Breast epithelium (tissue), 4 donors: ENCODE measurements at regions of chr12 and their contacts with region 1.

Region 1: GRCh38 chr12:76094754-76095153 is 10.3 kb upstream of the NAP1L1 start:
- DNase-seq: no peak
- H3K4me3 ChIP-seq: no peak overlapping the region
- H3K27ac ChIP-seq: no peak overlapping the region
- H3K4me1 ChIP-seq: no peaks in the 10 kb centered on the region
- H3K27me3 ChIP-seq: no peaks in the 10 kb centered on the region
- CTCF ChIP-seq: no peak
- POLR2A ChIP-seq: no peak

Region 2: GRCh38 chr12:75556311-75556899 is 538.3 kb before region 1 on chr12:
- intact Hi-C with region 1: loop called (anchors 5 kb)
- DNase-seq: no peak
- H3K4me3 ChIP-seq: no peak overlapping the region
- H3K27ac ChIP-seq: no peak overlapping the region
- H3K4me1 ChIP-seq: peaks cover 0 to 4% of the 10 kb centered on the region in 2 donors
- H3K27me3 ChIP-seq: no peaks in the 10 kb centered on the region
- CTCF ChIP-seq: no peak
- POLR2A ChIP-seq: no peak

Region 3: GRCh38 chr12:75900781-75901254 is 193.9 kb before region 1 on chr12:
- intact Hi-C with region 1: no loop called
- DNase-seq: no peak
- H3K4me3 ChIP-seq: no peak overlapping the region
- H3K27ac ChIP-seq: no peak overlapping the region
- H3K4me1 ChIP-seq: no peaks in the 10 kb centered on the region
- H3K27me3 ChIP-seq: no peaks in the 10 kb centered on the region
- CTCF ChIP-seq: no peak
- POLR2A ChIP-seq: no peak

Region 4: GRCh38 chr12:76083904-76084862 is 10.6 kb before region 1 on chr12 and contains the start of gene NAP1L1:
- intact Hi-C with region 1: no loop called
- DNase-seq: peak; percentile 93 to 94
- H3K4me3 ChIP-seq: peak within 1 kb of the TSS; percentile 77 to 97 (median 91)
- H3K27ac ChIP-seq: peak within 1 kb of the TSS; percentile 98 to 99
- H3K4me1 ChIP-seq: peaks cover 0 to 4% of the 10 kb centered on the region in 2 donors
- H3K27me3 ChIP-seq: no peaks in the 10 kb centered on the region
- CTCF ChIP-seq: peak in 1 of 3 donors; percentile 7
- POLR2A ChIP-seq: peak; percentile 83
- total RNA-seq, gene NAP1L1: 356 to 419 (median 394) TPM